Right ventricle myocardium superior (tissue), 1 donor: ENCODE measurements at regions of chr11 and their contacts with region 1.

Region 1: DNA sequence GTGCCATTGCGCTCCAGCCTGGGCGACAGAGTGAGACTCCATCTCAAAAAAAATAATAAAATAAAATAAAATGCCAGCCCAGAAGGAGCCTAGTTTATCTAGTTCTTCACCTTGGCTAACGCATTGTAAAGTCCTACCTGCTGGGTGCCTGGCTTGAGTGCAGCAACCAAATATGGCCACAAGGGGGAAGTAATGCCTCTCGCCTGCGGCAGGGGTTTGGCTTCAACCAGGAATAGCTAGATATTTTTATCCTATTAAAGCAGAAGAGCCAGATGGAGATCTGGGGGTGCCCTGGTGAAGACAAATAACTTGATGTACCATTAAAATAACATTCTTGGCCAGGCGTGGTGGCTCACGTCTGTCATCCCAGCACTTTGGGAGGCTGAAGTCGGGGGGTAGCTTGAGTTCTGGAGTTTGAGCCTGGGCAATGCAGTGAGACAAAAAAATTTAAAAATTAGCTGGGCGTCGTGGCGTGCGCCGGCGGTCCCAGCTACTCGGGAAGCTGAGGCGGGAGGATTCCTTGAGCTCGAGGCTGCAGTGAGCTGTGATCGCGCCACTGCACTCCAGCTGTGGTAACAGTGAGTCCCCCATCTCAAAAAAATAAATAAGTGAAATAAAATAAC is 20.6 kb upstream of the PLEKHB1 start:
- DNase-seq: peak; percentile 73
- ATAC-seq: peak; percentile 88

Region 2: DNA sequence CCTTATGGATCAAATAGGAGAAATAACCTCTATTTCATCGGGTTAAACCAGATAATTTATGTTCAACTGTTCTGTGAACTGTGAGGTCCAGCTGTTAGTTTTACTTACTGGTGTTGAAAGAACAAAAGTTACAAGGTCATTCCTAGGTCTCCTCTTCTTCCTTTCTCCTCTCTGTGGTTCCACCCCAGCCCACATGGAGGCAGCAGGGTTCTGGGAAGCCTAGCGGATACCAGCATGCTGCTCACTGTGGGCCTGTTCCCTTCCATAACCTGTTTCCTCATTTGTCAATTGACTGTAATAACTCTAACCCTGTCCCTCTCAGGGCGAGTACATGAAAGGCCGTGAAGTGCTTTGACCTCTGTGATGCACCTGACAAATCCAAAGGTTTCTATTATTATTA is 221.8 kb before region 1 on chr11:
- intact Hi-C with region 1: loop called (anchors 10 kb)
- DNase-seq: peak; percentile 83
- ATAC-seq: peak; percentile 93

Region 3: GRCh38 chr11:73661035-73661628 is 35.3 kb after region 1 on chr11:
- intact Hi-C with region 1: loop called (anchors 2 kb)
- DNase-seq: peak; percentile 94
- ATAC-seq: peak; percentile 98